A549 (cell line): ENCODE measurements at regions of chrX and their contacts with region 1.

Region 1: DNA sequence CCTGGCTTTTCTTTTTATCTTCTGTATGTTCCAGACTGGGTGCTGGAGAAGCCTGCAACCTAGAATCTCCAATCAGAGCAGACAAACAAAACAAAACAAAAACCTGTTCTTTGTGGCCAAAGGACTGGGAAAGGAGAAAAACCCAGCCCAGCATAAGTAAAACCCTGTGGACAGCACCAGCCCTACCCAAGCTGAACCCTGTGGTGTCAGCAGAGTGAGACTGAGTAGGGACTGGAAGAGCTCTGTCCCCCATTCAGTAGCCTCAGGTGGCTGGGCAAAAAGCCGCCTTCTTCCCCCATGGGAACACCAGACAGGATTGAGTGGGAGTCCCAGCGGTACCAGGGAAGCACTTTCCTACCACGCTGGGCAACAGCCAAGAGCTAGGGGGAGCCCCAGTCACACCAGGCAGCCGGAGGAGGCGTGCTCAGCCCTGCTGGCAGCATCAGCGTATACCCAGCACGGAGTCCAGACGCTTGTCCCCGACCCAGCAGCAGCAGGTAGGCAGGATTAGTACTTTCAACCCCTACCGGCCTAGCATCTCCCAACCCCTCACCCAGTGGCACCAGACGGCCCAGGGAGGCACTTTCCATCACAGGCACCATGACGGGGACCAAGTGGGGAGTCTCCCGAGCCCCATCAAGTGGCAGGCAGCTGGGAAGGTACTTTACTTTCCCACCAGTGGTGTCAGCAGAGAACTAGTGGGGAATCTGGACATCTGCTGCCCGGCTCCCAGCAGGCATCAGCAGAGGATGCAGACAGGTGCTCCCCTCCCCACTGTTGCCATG is 8.6 kb upstream of the JADE3 start:
- DNase-seq: peak; percentile 80 to 83
- ATAC-seq: peak; percentile 100
- H3K4me3 ChIP-seq: peak overlapping the region; percentile 46
- H3K27ac ChIP-seq: peak overlapping the region; percentile 53 to 78; a peak in 3 of 6 replicates
- H3K4me1 ChIP-seq: 0 out of 3 replicates have a peak, but pooled peaks cover 5% of the 10 kb centered on the region
- CTCF ChIP-seq: peak; percentile 90
- EP300 ChIP-seq: no peak
- POLR2A ChIP-seq: no peak
- RAD21 ChIP-seq: peak; percentile 76 to 86

Region 2: DNA sequence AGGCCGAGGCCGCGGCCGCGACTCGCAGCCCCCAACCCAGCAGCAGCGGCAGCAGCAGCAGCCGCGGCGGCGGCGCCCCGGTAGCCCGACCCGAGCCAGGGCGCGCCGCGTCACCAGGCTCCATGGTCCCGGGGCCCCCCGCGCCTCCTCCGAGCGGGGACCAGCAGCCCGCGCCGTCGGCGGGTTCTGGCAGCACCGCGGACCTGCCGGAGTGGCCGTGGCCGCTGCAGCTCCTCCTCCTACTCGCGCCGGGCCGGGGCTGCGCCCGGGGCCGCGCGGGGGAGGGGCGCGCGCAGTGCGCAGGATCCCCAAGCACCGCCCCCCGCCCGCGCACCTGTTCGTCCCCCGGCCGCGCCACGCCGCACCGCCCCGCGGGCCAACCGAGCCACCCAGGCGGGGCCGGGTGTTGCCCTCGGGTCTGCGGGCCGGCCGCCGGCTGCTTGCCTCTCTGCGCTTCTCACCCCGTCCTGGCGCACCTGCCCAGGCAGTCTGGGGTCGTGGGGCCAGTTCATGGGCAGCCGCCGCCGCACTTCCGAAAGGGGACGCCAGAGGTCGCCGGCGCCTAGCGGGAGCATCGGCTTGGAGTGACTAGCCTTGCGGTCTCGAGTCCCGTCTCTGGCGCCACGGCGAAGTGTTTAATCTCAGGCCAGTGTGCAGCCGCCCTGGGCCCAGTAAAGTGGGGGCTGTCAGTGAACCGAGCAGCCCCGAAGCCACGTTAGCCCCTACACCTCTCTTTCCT is 144.6 kb before region 1 on chrX and contains the start of gene SLC9A7:
- CTCF ChIA-PET with region 1: interaction called, 13 read pairs
- POLR2A ChIA-PET with region 1: no interaction called
- DNase-seq: peak; percentile 55 to 84
- ATAC-seq: peak; percentile 89 to 92
- H3K4me3 ChIP-seq: peak within 1 kb of the TSS; percentile 89
- H3K27ac ChIP-seq: peak within 1 kb of the TSS; percentile 87 to 93
- H3K4me1 ChIP-seq: peaks cover 23% of the 10 kb centered on the region
- CTCF ChIP-seq: peak; percentile 86
- EP300 ChIP-seq: no peak
- POLR2A ChIP-seq: peak; percentile 42; the same call in 1 of the 2 replicates
- RAD21 ChIP-seq: peak; percentile 91 to 98
- polyA plus RNA-seq, gene SLC9A7: 21.1 and 22.3 TPM in 2 replicates

Region 3: DNA sequence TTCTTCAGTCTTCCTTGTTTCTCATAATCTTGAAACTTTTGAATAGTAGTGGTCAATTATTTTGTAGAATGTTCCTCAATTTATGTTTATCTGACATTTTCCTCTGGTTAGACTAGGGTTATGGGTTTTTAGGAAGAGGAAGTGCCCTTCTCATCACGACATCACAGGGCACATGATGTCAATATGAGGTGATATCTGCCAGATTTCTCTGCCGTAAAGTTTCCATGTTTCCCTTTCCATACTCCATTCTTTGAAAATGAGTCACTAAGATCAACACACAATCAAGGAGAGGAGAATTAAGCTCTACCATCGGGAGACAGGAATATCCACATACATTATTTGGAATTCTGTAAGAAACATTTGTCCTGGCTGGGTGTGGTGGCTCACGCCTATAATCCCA is 38.4 kb before region 1 on chrX:
- CTCF ChIA-PET with region 1: interaction called, 10 read pairs
- POLR2A ChIA-PET with region 1: no interaction called
- DNase-seq: peak; percentile 33 to 63
- ATAC-seq: peak in 1 of 2 experiments; percentile 72; a peak in 4 of 6 replicates
- H3K4me3 ChIP-seq: no peak overlapping the region
- H3K27ac ChIP-seq: peak overlapping the region in 1 of 2 experiments; percentile 59; a peak in 2 of 6 replicates
- H3K4me1 ChIP-seq: peaks cover 15% of the 10 kb centered on the region; the same call in 2 of the 3 replicates
- CTCF ChIP-seq: no peak
- EP300 ChIP-seq: no peak
- POLR2A ChIP-seq: no peak
- RAD21 ChIP-seq: no peak

Region 4: GRCh38 chrX:46918434-46918833 is 14.8 kb after region 1 on chrX:
- CTCF ChIA-PET with region 1: interaction called, 22 read pairs
- POLR2A ChIA-PET with region 1: no interaction called
- DNase-seq: no peak
- ATAC-seq: no peak
- H3K4me3 ChIP-seq: no peak overlapping the region
- H3K27ac ChIP-seq: no peak overlapping the region
- H3K4me1 ChIP-seq: peaks cover 13% of the 10 kb centered on the region
- CTCF ChIP-seq: no peak
- EP300 ChIP-seq: no peak
- POLR2A ChIP-seq: no peak
- RAD21 ChIP-seq: no peak

Region 5: GRCh38 chrX:47030339-47030738 is 126.7 kb after region 1 on chrX:
- CTCF ChIA-PET with region 1: interaction called, 39 read pairs
- POLR2A ChIA-PET with region 1: no interaction called
- DNase-seq: peak; percentile 46 to 71
- ATAC-seq: peak in 1 of 2 experiments; percentile 71; a peak in 4 of 6 replicates
- H3K4me3 ChIP-seq: no peak overlapping the region
- H3K27ac ChIP-seq: no peak overlapping the region
- H3K4me1 ChIP-seq: no peaks in the 10 kb centered on the region
- CTCF ChIP-seq: peak; percentile 71
- EP300 ChIP-seq: no peak
- POLR2A ChIP-seq: no peak
- RAD21 ChIP-seq: peak; percentile 78 to 80

Region 6: DNA sequence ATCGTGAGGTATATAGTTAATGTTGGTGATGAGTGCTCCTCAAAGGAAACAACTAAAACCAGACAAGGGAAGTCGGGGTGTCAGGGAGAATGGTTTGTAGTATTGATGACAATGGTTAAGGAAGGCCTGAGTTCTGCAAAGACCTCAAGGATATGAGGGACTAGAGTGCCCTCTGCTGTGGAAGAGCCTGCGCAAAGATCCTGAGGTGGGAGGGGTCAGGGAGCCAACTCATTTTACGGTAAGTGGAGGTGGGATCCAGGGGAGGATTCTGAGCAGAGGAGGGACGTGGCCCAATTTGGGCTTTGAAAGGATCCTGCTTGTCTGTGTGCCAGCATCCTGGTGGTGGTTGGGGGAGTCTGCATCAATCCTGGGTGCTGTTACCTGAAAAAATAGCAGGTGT is 301.3 kb after region 1 on chrX:
- CTCF ChIA-PET with region 1: no interaction called
- POLR2A ChIA-PET with region 1: no interaction called
- DNase-seq: no peak
- ATAC-seq: peak in 1 of 2 experiments; percentile 21; a peak in 1 of 6 replicates
- H3K4me3 ChIP-seq: no peak overlapping the region
- H3K27ac ChIP-seq: no peak overlapping the region
- H3K4me1 ChIP-seq: peaks cover 18% of the 10 kb centered on the region
- CTCF ChIP-seq: no peak
- EP300 ChIP-seq: no peak
- POLR2A ChIP-seq: no peak
- RAD21 ChIP-seq: no peak